CD14-positive monocyte (primary cell): ENCODE measurements at regions of chr14 and their contacts with region 1.

Region 1: DNA sequence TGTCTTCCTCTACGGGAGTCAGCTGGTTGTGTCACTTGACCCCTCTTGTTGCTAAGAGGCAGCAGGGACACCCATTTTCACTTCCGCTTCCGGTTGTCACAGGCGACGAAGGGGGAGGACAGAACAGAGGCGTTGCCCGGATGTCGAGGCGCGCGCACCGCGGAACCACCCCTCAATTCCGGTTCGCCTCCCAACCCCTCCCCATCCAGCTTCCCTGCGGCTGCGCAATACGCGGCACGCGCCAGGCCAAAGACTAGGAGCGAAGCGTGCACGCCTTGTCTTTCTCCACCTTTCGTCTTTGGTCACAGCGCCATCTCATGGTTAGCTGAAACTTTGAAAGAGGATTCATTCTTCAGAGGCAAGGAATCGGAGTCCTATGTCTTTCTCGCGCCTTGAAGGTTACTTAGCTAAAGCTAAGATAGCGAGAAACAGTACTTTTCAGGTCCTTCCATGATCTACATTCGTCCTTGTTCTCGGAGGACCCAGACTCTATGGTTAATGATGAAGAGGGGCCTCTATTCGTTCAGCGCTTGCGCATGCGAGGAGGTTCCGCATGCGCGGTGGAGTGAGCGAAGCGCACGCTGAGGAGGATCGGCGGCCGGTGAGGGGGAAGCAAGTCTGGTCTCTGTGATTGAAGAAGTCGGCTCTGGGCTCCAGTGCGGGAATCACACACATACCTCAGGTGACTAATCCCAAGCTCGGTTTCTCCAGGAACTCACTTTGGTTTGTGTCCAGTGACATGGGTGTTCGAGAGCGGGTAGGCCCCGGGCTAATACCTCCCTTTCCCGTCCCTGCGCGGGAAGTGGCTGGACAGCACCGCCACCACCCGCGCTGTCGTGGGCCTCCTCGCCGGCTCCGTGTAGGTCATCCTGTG is at the starts of genes ATP6V1D and EIF2S1:
- DNase-seq: peak; percentile 99 to 100 (median 100)
- H3K4me3 ChIP-seq: peak within 1 kb of the TSS; percentile 70 to 97 (median 78)
- H3K4me3 Mint-ChIP-seq: peak within 1 kb of the TSS; percentile 96 to 97
- H3K27ac ChIP-seq: peak within 1 kb of the TSS; percentile 74 to 96
- H3K27ac Mint-ChIP-seq: peak within 1 kb of the TSS; percentile 95 to 98 (median 97)
- H3K4me1 ChIP-seq: peaks cover 17 to 33% of the 10 kb centered on the region in 2 donors
- H3K4me1 Mint-ChIP-seq: peaks cover 44% of the 10 kb centered on the region
- H3K27me3 ChIP-seq: no peaks in the 10 kb centered on the region
- H3K27me3 Mint-ChIP-seq: no peaks in the 10 kb centered on the region
- CTCF ChIP-seq: peak; percentile 100
- polyA plus RNA-seq, gene ATP6V1D: 18.4 to 122 (median 94.1) TPM
- polyA plus RNA-seq, gene EIF2S1: 21.9 to 111 (median 110) TPM

Region 2: DNA sequence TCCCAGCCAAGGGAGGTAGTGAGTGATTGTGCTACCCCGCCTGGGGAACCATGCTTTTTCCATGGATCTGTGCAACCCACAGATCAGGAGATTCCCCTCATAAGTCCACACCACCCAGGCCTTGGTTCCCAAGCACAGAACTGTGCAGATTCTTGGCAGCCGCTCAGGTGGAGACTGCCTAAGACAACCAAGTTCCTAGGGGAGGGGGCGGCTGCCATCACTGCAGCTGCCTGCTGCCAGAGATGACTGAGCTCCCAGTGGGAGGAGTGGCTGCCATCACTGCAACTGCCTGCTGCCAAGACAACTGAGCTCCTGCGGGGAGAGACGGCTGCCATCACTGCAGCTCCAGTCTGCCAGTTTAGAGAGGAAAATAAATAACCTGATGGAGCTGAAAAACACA is 309.1 kb before region 1 on chr14:
- intact Hi-C with region 1: no loop called
- DNase-seq: no peak
- H3K4me3 ChIP-seq: no peak overlapping the region
- H3K4me3 Mint-ChIP-seq: no peak overlapping the region
- H3K27ac ChIP-seq: no peak overlapping the region
- H3K27ac Mint-ChIP-seq: no peak overlapping the region
- H3K4me1 ChIP-seq: no peaks in the 10 kb centered on the region
- H3K4me1 Mint-ChIP-seq: no peaks in the 10 kb centered on the region
- H3K27me3 ChIP-seq: no peaks in the 10 kb centered on the region
- H3K27me3 Mint-ChIP-seq: no peaks in the 10 kb centered on the region
- CTCF ChIP-seq: no peak

Region 3: GRCh38 chr14:67240978-67241414 is 119.0 kb before region 1 on chr14:
- intact Hi-C with region 1: loop called in 1 of 2 experiments (anchors 5 kb)
- DNase-seq: peak; percentile 90 to 91 (median 91)
- H3K4me3 ChIP-seq: peak overlapping the region; percentile 81 to 92 (median 82)
- H3K4me3 Mint-ChIP-seq: peak overlapping the region; percentile 90 to 91
- H3K27ac ChIP-seq: peak overlapping the region; percentile 77 to 78
- H3K27ac Mint-ChIP-seq: peak overlapping the region; percentile 82 to 94 (median 89)
- H3K4me1 ChIP-seq: peaks cover 13 to 26% of the 10 kb centered on the region in 2 donors
- H3K4me1 Mint-ChIP-seq: peaks cover 23% of the 10 kb centered on the region
- H3K27me3 ChIP-seq: peaks cover 0 to 8% of the 10 kb centered on the region in 2 donors
- H3K27me3 Mint-ChIP-seq: peaks cover 5 to 21% (median 14%) of the 10 kb centered on the region in 3 donors
- CTCF ChIP-seq: no peak